Transverse colon (tissue), 4 donors: ENCODE measurements at regions of chr11 and their contacts with region 1.

Region 1: DNA sequence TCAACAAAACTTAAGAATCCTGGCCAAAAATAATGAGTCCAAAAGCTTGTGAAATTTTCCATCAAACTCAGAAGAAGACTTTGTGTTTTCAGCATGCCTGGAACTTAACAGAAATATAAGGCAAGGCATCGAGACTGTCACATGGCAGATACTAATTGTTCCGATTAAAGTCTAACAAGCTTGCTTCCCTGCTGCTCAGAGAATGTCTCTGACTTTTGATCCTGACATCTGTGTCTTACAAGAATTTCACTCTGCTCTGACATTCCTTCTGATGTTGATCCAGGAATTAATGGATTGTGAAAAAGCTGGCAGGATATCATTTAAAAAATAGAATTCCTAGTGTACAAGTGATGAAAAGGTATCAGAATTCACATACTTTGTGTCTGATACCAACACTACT is 170.2 kb downstream of the DCDC1 start:
- DNase-seq: no peak
- H3K4me3 ChIP-seq: no peak overlapping the region
- H3K27ac ChIP-seq: no peak overlapping the region
- H3K4me1 ChIP-seq: no peaks in the 10 kb centered on the region
- H3K27me3 ChIP-seq: no peaks in the 10 kb centered on the region
- CTCF ChIP-seq: no peak
- EP300 ChIP-seq: no peak
- POLR2A ChIP-seq: no peak

Region 2: DNA sequence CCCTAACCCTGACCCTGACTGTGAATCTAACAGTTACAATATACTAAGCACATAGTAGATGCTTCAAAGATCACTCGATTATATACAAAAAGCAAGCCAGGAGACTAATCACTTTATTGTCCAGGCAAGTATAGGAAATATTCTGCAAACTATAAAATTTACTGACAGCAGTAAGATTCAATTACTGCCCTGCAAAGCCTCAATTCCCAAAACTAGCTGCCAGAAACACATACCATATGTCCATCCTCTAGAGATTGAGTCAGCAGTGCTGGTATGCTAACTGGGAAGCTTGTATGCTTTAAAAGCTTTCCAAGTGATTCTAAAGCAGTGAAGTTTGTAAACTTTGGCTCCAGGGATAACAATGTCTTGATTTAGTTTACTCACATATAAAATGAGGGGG is 1935.8 kb after region 1 on chr11:
- in situ Hi-C with region 1: no loop called
- intact Hi-C with region 1: loop called (anchors 5 kb)
- DNase-seq: no peak
- H3K4me3 ChIP-seq: no peak overlapping the region
- H3K27ac ChIP-seq: no peak overlapping the region
- H3K4me1 ChIP-seq: peaks cover 0 to 11% (median 0%) of the 10 kb centered on the region in 4 donors
- H3K27me3 ChIP-seq: no peaks in the 10 kb centered on the region
- CTCF ChIP-seq: no peak
- EP300 ChIP-seq: no peak
- POLR2A ChIP-seq: no peak